ENCODE measurements at regions of chr2 and their contacts with region 1.

Region 1: GRCh38 chr2:189129971-189130370 is 49.6 kb downstream of the COL5A2 start:
- DNase-seq: peak; percentile 61
- H3K4me3 ChIP-seq: no peak overlapping the region
- H3K27ac ChIP-seq: no peak overlapping the region
- H3K27me3 ChIP-seq: no peaks in the 10 kb centered on the region
- CTCF ChIP-seq: no peak

Region 2: DNA sequence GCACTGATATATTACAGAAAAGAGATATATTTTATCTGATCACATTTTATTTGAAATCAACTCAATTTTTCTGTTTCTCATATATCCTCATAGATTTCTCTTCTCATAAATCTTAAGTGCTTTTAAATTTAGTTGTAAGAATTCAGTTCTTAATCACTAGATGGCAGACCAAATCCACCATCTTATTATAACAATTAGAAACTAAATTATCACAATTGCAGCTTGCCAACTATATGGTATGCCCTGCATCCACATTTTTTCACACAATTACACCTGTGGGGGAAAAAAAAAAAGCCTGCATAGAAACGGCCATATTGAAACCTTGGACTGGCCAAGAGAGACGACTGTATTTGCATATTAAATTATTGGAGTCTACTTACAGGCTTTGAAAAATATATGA is 14.8 kb before region 1 on chr2:
- CTCF ChIA-PET with region 1: no interaction called
- POLR2A ChIA-PET with region 1: no interaction called
- DNase-seq: no peak
- H3K4me3 ChIP-seq: no peak overlapping the region
- H3K27ac ChIP-seq: no peak overlapping the region
- H3K27me3 ChIP-seq: no peaks in the 10 kb centered on the region
- CTCF ChIP-seq: no peak

Region 3: GRCh38 chr2:189287982-189288521 is 158.1 kb after region 1 on chr2:
- CTCF ChIA-PET with region 1: interaction called, 4 read pairs
- POLR2A ChIA-PET with region 1: interaction called, 12 read pairs
- DNase-seq: peak; percentile 65
- H3K4me3 ChIP-seq: no peak overlapping the region
- H3K27ac ChIP-seq: no peak overlapping the region
- H3K27me3 ChIP-seq: no peaks in the 10 kb centered on the region
- CTCF ChIP-seq: peak; percentile 60

Measured in AG04450 (cell line).